ENCODE measurements at regions of chr14 and their contacts with region 1.

Region 1: GRCh38 chr14:31180299-31181051 is 27.1 kb downstream of the HECTD1 start:
- DNase-seq: no peak
- H3K4me3 Mint-ChIP-seq: no peak overlapping the region
- H3K27ac Mint-ChIP-seq: no peak overlapping the region
- H3K4me1 Mint-ChIP-seq: no peaks in the 10 kb centered on the region
- H3K27me3 Mint-ChIP-seq: no peaks in the 10 kb centered on the region

Region 2: GRCh38 chr14:31106768-31107167 is 73.7 kb before region 1 on chr14:
- CTCF ChIA-PET with region 1: no interaction called
- POLR2A ChIA-PET with region 1: no interaction called
- DNase-seq: no peak
- H3K4me3 Mint-ChIP-seq: no peak overlapping the region
- H3K27ac Mint-ChIP-seq: peak overlapping the region; percentile 13
- H3K4me1 Mint-ChIP-seq: no peaks in the 10 kb centered on the region
- H3K27me3 Mint-ChIP-seq: no peaks in the 10 kb centered on the region

Region 3: GRCh38 chr14:31137214-31137889 is 43.1 kb before region 1 on chr14:
- CTCF ChIA-PET with region 1: no interaction called
- POLR2A ChIA-PET with region 1: interaction called, 10 read pairs
- DNase-seq: no peak
- H3K4me3 Mint-ChIP-seq: no peak overlapping the region
- H3K27ac Mint-ChIP-seq: peak overlapping the region; percentile 22
- H3K4me1 Mint-ChIP-seq: no peaks in the 10 kb centered on the region
- H3K27me3 Mint-ChIP-seq: no peaks in the 10 kb centered on the region

Region 4: GRCh38 chr14:31194095-31194494 is 13.6 kb after region 1 on chr14:
- CTCF ChIA-PET with region 1: no interaction called
- POLR2A ChIA-PET with region 1: no interaction called
- DNase-seq: no peak
- H3K4me3 Mint-ChIP-seq: no peak overlapping the region
- H3K27ac Mint-ChIP-seq: no peak overlapping the region
- H3K4me1 Mint-ChIP-seq: peaks cover 35% of the 10 kb centered on the region
- H3K27me3 Mint-ChIP-seq: no peaks in the 10 kb centered on the region

Region 5: GRCh38 chr14:31207755-31208545 is 27.5 kb after region 1 on chr14 and contains the start of gene HECTD1:
- CTCF ChIA-PET with region 1: interaction called, 12 read pairs
- POLR2A ChIA-PET with region 1: no interaction called
- DNase-seq: peak; percentile 85
- H3K4me3 Mint-ChIP-seq: peak within 1 kb of the TSS; percentile 90
- H3K27ac Mint-ChIP-seq: peak within 1 kb of the TSS; percentile 100
- H3K4me1 Mint-ChIP-seq: peaks cover 53% of the 10 kb centered on the region
- H3K27me3 Mint-ChIP-seq: peaks cover 2% of the 10 kb centered on the region
- total RNA-seq, gene HECTD1: 97.2 to 110 TPM